Right ventricle myocardium superior (tissue), 1 donor: ENCODE measurements at regions of chr6 and their contacts with region 1.

Region 1: DNA sequence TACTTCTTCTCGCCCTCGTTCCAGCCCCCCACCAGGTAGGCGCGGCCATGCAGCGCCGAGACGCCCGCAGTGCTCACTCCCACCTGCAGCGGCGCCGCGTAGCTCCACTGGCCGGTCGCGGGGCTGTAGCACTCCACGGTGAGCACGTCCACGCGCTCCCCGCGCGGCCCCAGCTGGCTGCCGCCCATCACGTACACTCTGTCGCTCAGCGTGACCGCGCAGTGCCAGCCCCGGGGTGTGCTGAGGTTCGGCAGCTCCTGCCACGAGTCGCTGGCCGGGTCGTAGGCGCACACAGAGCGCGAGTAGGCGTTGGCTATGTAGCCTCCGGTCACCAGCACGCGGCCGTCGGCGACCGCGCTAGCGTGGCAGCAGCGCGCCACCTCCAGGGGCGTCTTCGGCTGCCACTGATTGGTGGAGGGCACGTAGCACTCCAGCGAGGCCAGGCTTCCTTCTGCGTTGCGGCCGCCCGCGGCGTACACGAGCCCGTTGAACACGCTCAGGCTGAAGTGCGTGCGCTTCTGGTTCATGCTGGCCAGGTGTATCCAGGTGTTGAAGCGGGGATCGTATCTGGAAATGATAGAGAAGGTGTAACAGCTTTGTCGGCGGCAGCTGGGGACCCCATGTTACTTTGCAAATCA is 13.7 kb downstream of the KLHL31 start:
- DNase-seq: peak; percentile 82
- ATAC-seq: peak; percentile 82

Region 2: GRCh38 chr6:53492860-53493634 is 158.8 kb before region 1 on chr6:
- intact Hi-C with region 1: loop called (anchors 10 kb)
- DNase-seq: no peak
- ATAC-seq: peak; percentile 82

Region 3: GRCh38 chr6:53544470-53545308 is 107.2 kb before region 1 on chr6 and contains the start of gene GCLC:
- intact Hi-C with region 1: loop called (anchors 5 kb)
- DNase-seq: peak; percentile 98
- ATAC-seq: peak; percentile 84
- total RNA-seq, gene GCLC: 26.6 TPM

Region 4: DNA sequence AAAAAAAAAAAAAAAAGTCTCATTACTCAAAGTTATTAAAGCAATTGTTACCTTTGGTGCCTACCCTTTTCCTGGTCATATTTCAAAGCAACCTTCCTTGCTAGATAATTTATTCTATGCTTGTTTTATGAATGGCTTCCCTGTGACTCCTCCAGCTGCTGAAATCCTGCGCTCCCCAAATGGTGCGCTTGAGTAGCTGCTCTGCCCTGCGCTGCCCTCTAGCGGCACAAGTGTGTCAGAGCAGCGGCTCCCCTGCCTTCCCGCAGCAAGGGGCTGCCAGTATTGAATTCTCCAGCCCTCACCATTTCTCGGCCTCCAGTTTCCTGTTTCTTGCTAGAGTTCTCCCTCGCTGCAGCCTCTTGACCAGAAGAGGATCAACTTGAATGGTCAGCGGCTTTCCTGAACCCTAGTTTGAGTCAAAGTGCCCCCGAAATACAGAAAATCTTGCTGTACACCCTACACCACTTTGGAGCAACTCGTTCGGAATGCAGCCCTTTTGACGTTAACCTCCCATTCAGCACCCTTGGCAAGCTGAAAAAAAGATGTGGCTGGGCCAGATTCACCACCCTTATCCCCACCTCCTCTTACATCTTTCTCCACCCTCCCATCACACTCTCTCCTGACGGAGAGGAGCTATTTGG is 74.0 kb after region 1 on chr6:
- intact Hi-C with region 1: loop called (anchors 5 kb)
- DNase-seq: peak; percentile 82
- ATAC-seq: peak; percentile 95

Region 5: GRCh38 chr6:53961679-53962370 is 309.9 kb after region 1 on chr6:
- intact Hi-C with region 1: no loop called
- DNase-seq: no peak
- ATAC-seq: peak; percentile 25